ENCODE measurements at regions of chr2 and their contacts with region 1.

Region 1: DNA sequence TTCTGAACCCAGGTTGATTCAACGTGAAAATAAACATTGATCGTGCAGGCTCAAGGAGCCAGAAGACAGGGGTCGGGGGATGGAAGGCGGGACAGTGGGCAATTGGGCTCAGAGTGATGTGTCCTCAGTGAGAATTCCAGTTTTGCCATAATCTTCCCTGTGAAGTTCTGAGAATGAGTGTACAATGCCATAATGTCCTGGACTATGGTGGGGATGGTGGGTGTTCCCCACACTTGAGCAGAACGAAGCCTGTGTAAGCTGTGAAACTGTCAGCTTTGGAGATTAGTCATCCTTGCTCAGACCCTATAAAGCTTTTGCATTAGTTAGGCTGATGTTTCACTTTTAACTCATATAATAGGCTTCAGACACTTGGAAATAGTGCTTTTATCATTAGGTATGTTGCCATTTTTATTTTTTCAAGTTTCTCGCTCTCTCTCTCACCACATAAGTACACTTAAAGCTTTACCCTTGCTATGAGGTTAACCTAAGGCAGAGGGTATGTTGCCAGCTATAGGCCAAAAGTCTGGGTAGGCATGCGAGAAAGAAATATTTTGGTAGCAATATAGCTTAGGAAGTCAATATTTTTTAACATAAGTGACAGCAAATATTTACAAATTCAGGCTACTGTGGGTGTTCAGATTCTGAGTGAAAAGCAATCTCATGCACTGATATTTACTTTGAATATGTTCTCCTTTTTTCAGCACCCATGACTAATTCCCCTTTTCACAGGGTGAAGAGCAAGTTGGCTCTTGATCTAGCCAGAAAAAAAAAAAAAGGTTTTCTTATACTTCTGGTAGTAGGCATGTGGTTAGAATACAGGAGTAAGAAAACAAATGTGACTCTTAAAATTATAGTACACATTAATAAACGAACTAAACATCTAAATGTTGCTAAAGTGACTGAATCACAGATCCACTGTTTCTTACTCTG is 47.2 kb downstream of the CDC42EP3 start:
- DNase-seq: peak; percentile 93
- ATAC-seq: peak; percentile 79
- H3K4me3 ChIP-seq: peak overlapping the region; percentile 24; the same call in 1 of the 2 replicates
- H3K27ac ChIP-seq: peak overlapping the region; percentile 97
- H3K4me1 ChIP-seq: peaks cover 54% of the 10 kb centered on the region
- H3K27me3 ChIP-seq: no peaks in the 10 kb centered on the region
- CTCF ChIP-seq: no peak
- EP300 ChIP-seq: peak; percentile 56 to 80
- POLR2A ChIP-seq: no peak
- RAD21 ChIP-seq: peak; percentile 1; the same call in 1 of the 2 replicates

Region 2: DNA sequence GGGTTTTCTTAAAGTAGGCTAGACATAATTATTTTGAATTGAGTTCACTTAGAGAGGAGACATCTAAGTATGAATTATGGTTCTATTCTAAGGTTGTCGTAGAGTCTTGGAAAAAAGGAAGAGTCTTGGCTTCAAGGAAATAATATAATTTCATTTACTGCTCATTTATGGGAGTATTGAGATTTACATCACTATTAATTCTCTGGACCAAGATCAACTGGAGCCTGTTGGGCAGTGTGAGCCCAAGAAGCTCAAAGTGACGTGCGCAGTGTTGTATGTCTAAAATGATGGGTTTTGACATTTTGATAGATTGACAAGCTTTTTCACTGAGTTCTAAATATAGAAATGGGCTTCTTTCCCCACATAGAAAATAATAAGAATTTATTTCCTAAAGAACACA is 125.1 kb before region 1 on chr2:
- CTCF ChIA-PET with region 1: no interaction called
- POLR2A ChIA-PET with region 1: no interaction called
- RAD21 ChIA-PET with region 1: no interaction called
- SMC1A ChIA-PET with region 1: no interaction called
- in situ Hi-C with region 1: no loop called
- intact Hi-C with region 1: no loop called
- DNase-seq: no peak
- ATAC-seq: no peak
- H3K4me3 ChIP-seq: no peak overlapping the region
- H3K27ac ChIP-seq: no peak overlapping the region
- H3K4me1 ChIP-seq: no peaks in the 10 kb centered on the region
- H3K27me3 ChIP-seq: no peaks in the 10 kb centered on the region
- CTCF ChIP-seq: no peak
- EP300 ChIP-seq: no peak
- POLR2A ChIP-seq: no peak
- RAD21 ChIP-seq: no peak

Region 3: GRCh38 chr2:37543999-37544557 is 80.2 kb before region 1 on chr2:
- CTCF ChIA-PET with region 1: interaction called, 7 read pairs
- POLR2A ChIA-PET with region 1: interaction called, 9 read pairs
- RAD21 ChIA-PET with region 1: interaction called, 19 read pairs
- SMC1A ChIA-PET with region 1: interaction called, 97 read pairs
- in situ Hi-C with region 1: no loop called
- intact Hi-C with region 1: no loop called
- DNase-seq: no peak
- ATAC-seq: no peak
- H3K4me3 ChIP-seq: no peak overlapping the region
- H3K27ac ChIP-seq: no peak overlapping the region
- H3K4me1 ChIP-seq: peaks cover 8% of the 10 kb centered on the region; the same call in 1 of the 2 replicates
- H3K27me3 ChIP-seq: no peaks in the 10 kb centered on the region
- CTCF ChIP-seq: no peak
- EP300 ChIP-seq: no peak
- POLR2A ChIP-seq: no peak
- RAD21 ChIP-seq: no peak

Region 4: DNA sequence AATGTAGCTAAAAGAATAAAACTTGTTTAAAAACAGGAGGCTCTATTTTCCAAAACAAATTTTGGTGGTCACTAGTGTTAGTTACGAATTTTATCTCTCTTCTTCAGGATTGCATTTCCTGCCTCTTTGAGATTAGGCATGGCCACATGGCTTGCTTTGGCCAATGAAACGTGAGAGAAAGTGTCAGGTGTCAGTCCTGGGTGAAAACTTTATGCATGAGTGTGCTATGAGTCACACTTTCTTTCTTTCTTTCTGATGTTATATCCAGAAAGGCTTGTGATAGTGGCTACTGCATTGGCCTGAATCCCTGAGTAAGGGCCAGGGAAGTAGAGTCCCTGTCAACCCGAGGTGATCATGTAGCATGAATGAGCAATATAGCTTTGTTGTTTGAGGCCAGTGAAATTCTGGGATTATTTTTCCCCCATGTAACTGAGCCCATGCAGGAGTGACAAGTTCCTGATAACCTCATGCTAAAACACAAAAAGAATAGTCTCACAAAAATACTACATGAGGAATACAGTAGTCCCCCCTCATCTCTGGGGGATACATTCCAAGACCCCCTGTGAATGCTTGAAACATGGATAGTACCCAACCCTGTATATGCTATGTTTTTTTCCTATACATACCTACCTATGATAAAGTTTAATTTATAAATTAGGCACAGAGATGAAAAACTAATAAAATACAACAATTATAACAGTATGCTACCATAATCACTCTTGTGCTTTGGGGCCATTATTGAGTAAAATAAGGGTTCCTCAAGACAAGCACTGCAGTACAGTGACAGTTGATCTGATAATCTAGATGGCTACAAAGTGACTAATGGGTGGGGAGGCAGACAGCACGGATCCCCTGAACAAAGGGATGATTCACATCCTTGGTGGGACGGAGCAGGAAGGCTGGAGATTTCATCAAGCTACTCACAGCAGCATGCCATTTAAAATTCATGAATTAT is 62.3 kb before region 1 on chr2:
- CTCF ChIA-PET with region 1: interaction called, 24 read pairs
- POLR2A ChIA-PET with region 1: interaction called, 28 read pairs
- RAD21 ChIA-PET with region 1: interaction called, 123 read pairs
- SMC1A ChIA-PET with region 1: interaction called, 102 read pairs
- in situ Hi-C with region 1: no loop called
- intact Hi-C with region 1: no loop called
- DNase-seq: no peak
- ATAC-seq: peak; percentile 86
- H3K4me3 ChIP-seq: no peak overlapping the region
- H3K27ac ChIP-seq: peak overlapping the region; percentile 42; the same call in 1 of the 2 replicates
- H3K4me1 ChIP-seq: peaks cover 46% of the 10 kb centered on the region
- H3K27me3 ChIP-seq: no peaks in the 10 kb centered on the region
- CTCF ChIP-seq: no peak
- EP300 ChIP-seq: no peak
- POLR2A ChIP-seq: no peak
- RAD21 ChIP-seq: no peak

Region 5: DNA sequence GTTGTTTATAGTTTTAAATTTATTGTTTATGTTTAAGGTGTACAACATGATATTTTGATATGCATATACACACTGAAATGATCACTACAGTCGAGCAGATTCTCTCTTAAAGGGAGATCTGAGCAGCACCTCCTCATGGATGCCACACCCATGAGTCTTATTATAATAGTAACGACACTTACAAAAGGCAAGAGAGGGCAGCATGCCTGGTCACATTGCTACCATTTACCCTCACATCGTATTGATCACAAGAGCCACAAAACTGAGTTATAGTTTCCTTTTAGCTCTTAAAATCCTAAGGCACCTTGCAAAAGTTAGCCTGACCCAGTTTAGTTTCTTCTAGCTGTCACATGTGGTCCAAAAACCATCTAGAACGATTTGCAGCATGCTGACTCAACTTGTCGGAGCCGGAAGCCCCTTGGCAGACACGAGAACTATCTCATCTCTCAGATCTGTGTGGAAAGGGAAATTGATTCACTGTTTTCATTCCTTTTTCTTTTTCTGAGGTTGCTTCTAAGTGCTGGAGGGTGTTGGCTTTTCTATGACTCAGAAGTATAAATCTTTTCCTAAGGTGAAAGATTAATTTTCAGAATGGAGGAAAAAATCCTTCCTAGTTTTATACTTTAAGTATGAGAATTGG is 38.1 kb before region 1 on chr2:
- CTCF ChIA-PET with region 1: interaction called, 5 read pairs
- POLR2A ChIA-PET with region 1: interaction called, 126 read pairs
- RAD21 ChIA-PET with region 1: interaction called, 165 read pairs
- SMC1A ChIA-PET with region 1: interaction called, 178 read pairs
- in situ Hi-C with region 1: no loop called
- intact Hi-C with region 1: no loop called
- DNase-seq: peak; percentile 68
- ATAC-seq: peak; percentile 58
- H3K4me3 ChIP-seq: no peak overlapping the region
- H3K27ac ChIP-seq: peak overlapping the region; percentile 61
- H3K4me1 ChIP-seq: peaks cover 42% of the 10 kb centered on the region
- H3K27me3 ChIP-seq: no peaks in the 10 kb centered on the region
- CTCF ChIP-seq: no peak
- EP300 ChIP-seq: no peak
- POLR2A ChIP-seq: no peak
- RAD21 ChIP-seq: no peak

Region 6: GRCh38 chr2:37635504-37636380 is 11.5 kb after region 1 on chr2:
- CTCF ChIA-PET with region 1: interaction called, 32 read pairs
- POLR2A ChIA-PET with region 1: interaction called, 62 read pairs
- RAD21 ChIA-PET with region 1: interaction called, 36 read pairs
- SMC1A ChIA-PET with region 1: interaction called, 118 read pairs
- in situ Hi-C with region 1: no loop called
- intact Hi-C with region 1: loop called (anchors 1 kb)
- DNase-seq: peak; percentile 92
- ATAC-seq: peak; percentile 80
- H3K4me3 ChIP-seq: no peak overlapping the region
- H3K27ac ChIP-seq: peak overlapping the region; percentile 91
- H3K4me1 ChIP-seq: peaks cover 26% of the 10 kb centered on the region
- H3K27me3 ChIP-seq: no peaks in the 10 kb centered on the region
- CTCF ChIP-seq: no peak
- EP300 ChIP-seq: peak; percentile 27 to 69; a peak in 3 of 4 replicates
- POLR2A ChIP-seq: peak; percentile 14
- RAD21 ChIP-seq: peak; percentile 37; the same call in 1 of the 2 replicates

Region 7: GRCh38 chr2:37648331-37649011 is 24.2 kb after region 1 on chr2:
- CTCF ChIA-PET with region 1: interaction called, 8 read pairs
- POLR2A ChIA-PET with region 1: interaction called, 166 read pairs
- RAD21 ChIA-PET with region 1: interaction called, 176 read pairs
- SMC1A ChIA-PET with region 1: interaction called, 147 read pairs
- in situ Hi-C with region 1: no loop called
- intact Hi-C with region 1: no loop called
- DNase-seq: no peak
- ATAC-seq: no peak
- H3K4me3 ChIP-seq: no peak overlapping the region
- H3K27ac ChIP-seq: peak overlapping the region; percentile 64
- H3K4me1 ChIP-seq: peaks cover 52% of the 10 kb centered on the region
- H3K27me3 ChIP-seq: no peaks in the 10 kb centered on the region
- CTCF ChIP-seq: peak in 1 of 3 experiments; percentile 24; a peak in 2 of 6 replicates
- EP300 ChIP-seq: no peak
- POLR2A ChIP-seq: 0 out of 2 replicates have a peak, but pooled peaks have one; percentile 16
- RAD21 ChIP-seq: 0 out of 2 replicates have a peak, but pooled peaks have one; percentile 20

Region 8: DNA sequence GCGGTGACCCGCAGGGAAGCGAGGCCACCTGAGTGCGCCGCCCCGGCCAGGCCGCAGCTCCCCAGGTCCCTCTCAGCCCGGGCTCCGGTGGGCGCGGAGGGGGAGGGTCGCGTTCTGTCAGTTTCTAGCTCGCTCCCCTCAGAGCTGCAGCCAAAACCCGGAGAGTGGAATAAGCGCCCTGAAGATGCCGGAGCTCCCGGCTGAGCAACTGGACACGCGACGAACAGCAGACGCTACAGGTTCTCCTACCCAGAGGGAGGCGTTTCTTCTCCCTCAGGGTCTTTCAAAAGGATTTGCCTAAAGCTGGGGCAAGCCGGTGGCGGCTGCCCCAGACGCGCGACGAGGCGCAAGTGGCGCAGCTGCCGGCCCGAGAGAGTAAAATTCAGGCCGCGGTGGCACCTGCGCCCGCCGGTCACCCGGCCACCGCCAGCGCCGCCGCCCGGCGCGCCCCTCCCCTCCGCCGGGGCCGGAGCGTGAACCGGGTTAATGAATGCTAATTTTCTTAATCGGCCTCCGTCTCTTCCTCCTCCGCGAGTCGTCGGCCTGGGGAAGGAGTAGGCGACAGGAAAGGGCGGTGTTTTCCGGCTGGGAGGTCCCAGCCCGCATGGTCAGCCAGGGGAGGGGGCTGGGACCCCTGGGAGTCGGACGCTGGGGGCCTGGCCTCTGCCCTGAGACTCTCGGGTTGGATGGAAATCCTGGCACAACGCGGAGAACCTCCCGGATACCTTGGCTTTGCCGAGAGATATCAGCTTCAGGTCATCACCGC is 48.1 kb after region 1 on chr2:
- CTCF ChIA-PET with region 1: interaction called, 10 read pairs
- POLR2A ChIA-PET with region 1: interaction called, 52 read pairs
- RAD21 ChIA-PET with region 1: interaction called, 122 read pairs
- SMC1A ChIA-PET with region 1: interaction called, 96 read pairs
- in situ Hi-C with region 1: no loop called
- intact Hi-C with region 1: loop called (anchors 5 kb)
- DNase-seq: no peak
- ATAC-seq: peak; percentile 58
- H3K4me3 ChIP-seq: peak overlapping the region; percentile 87
- H3K27ac ChIP-seq: peak overlapping the region; percentile 77
- H3K4me1 ChIP-seq: no peaks in the 10 kb centered on the region; the same call in 1 of the 2 replicates
- H3K27me3 ChIP-seq: no peaks in the 10 kb centered on the region
- CTCF ChIP-seq: no peak
- EP300 ChIP-seq: no peak
- POLR2A ChIP-seq: peak; percentile 51; the same call in 1 of the 2 replicates
- RAD21 ChIP-seq: no peak

Region 9: DNA sequence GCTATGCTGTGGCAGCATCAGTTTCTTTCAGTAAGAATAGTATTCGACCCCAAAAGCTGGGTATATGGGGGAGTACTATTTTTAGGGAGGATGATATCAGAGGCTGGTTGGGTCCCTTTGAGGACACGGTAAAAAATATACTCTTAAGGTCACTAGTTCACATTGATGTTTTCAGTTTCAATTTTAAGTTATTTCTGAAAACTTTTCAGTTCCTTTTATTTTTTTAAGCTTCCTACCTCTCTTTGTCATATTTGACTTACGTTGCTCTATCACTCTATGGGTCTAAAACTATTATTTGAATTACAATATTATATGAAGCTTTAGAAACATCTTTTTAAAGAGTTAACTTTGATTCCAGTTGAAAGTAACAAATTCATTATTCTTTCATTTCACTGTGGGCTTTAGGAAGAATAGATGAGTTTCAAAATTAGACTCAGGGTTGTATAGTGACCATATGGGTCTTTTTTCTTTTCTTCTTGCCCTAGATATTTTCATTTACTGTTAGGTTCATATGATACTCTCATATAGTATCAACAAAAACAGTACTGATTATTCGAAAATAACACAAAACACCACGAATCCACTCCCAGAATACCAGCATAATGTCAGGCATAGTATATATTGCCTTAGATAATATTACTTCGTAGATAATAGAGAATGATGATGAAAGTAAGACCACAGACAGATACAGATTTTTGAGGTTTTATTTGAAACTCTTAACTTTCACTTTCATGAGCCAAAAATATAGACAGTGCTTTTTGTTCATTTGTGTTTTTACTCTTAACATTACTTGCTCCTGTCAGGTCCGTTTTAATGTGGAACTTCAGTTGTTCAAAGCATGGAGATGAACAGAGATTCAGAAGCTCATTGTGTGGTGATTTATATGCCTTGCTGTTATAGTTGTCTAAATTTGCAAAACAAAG is 310.6 kb after region 1 on chr2:
- CTCF ChIA-PET with region 1: no interaction called
- POLR2A ChIA-PET with region 1: no interaction called
- RAD21 ChIA-PET with region 1: no interaction called
- SMC1A ChIA-PET with region 1: no interaction called
- in situ Hi-C with region 1: no loop called
- intact Hi-C with region 1: no loop called
- DNase-seq: peak; percentile 41
- ATAC-seq: peak; percentile 94
- H3K4me3 ChIP-seq: peak overlapping the region; percentile 69
- H3K27ac ChIP-seq: peak overlapping the region; percentile 93
- H3K4me1 ChIP-seq: peaks cover 15% of the 10 kb centered on the region
- H3K27me3 ChIP-seq: no peaks in the 10 kb centered on the region
- CTCF ChIP-seq: no peak
- EP300 ChIP-seq: peak; percentile 62 to 84
- POLR2A ChIP-seq: no peak
- RAD21 ChIP-seq: peak; percentile 27